Activated T-helper 1 cell treated with anti-CD3 and anti-CD28 coated beads, Interleukin-12 subunit alpha, Interleukin-12 subunit beta, Interleukin-2, Interleukin-4 antibody, amounts not matched to agents 30 ng/mL and 10 ng/mL and 1 ng/mL, durations not matched to agents 14 hours and 24 hours and 36 hours (primary cell): ENCODE measurements at regions of chr22 and their contacts with region 1.

Region 1: GRCh38 chr22:22195265-22196017 is 49.1 kb upstream of the VPREB1 start:
- DNase-seq: peak; percentile 64
- H3K4me3 Mint-ChIP-seq: no peak overlapping the region
- H3K27ac Mint-ChIP-seq: no peak overlapping the region
- H3K4me1 Mint-ChIP-seq: no peaks in the 10 kb centered on the region
- H3K27me3 Mint-ChIP-seq: peaks cover 27% of the 10 kb centered on the region

Region 2: GRCh38 chr22:22156716-22157347 is 38.6 kb before region 1 on chr22:
- intact Hi-C with region 1: loop called (anchors 1 kb)
- DNase-seq: peak; percentile 48
- H3K4me3 Mint-ChIP-seq: no peak overlapping the region
- H3K27ac Mint-ChIP-seq: peak overlapping the region; percentile 51
- H3K4me1 Mint-ChIP-seq: peaks cover 4% of the 10 kb centered on the region
- H3K27me3 Mint-ChIP-seq: peaks cover 16% of the 10 kb centered on the region